Mammary epithelial cell (primary cell): ENCODE measurements at regions of chr3 and their contacts with region 1.

Region 1: DNA sequence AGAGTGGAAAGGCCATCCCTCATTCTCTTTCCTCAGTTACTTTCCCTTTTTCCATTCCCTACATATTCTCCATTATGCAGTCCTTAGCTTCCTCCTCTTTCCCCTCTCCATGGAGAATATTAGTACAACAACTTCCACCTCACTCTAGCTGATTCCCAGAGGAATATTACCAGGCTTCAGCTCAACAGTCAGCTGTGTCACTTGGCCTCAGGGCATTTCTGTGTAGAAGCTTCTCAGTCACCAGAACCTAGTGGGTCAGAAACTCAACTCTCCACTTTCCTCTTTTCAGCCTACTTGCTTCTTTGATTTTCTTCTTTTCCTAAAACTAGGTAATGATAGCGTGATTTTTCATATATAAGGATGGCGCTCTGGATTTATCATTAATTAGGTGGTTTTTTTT is 34.1 kb downstream of the PARP14 start:
- DNase-seq: no peak
- H3K4me3 ChIP-seq: no peak overlapping the region
- H3K27ac ChIP-seq: no peak overlapping the region
- H3K4me1 ChIP-seq: no peaks in the 10 kb centered on the region
- H3K27me3 ChIP-seq: no peaks in the 10 kb centered on the region
- CTCF ChIP-seq: no peak

Region 2: GRCh38 chr3:122691195-122691594 is 23.5 kb before region 1 on chr3:
- CTCF ChIA-PET with region 1: no interaction called
- dilution Hi-C with region 1: no loop called
- in situ Hi-C with region 1: no loop called
- intact Hi-C with region 1: loop called (anchors 2 kb)
- DNase-seq: no peak
- H3K4me3 ChIP-seq: no peak overlapping the region
- H3K27ac ChIP-seq: no peak overlapping the region
- H3K4me1 ChIP-seq: no peaks in the 10 kb centered on the region
- H3K27me3 ChIP-seq: no peaks in the 10 kb centered on the region
- CTCF ChIP-seq: no peak

Region 3: DNA sequence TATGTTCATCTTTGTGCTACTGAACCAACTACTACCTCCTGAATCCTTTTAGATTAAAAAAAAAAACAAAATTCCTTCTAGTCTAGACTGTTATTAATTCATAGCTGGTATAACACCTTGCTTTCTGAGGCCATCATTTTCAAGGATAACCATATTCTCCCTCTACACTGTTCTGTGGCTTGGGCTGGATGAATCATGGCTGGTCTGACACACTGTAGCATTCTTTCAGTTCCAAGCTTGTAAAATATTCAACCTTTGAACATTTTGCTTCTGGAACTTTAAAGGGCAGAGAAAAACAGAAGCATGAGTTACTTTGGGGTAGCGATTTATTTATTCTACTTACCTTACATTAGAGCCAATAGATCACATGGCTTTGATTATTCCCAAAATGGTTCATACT is 71.4 kb after region 1 on chr3:
- CTCF ChIA-PET with region 1: no interaction called
- dilution Hi-C with region 1: loop called (anchors 5 kb)
- in situ Hi-C with region 1: no loop called
- intact Hi-C with region 1: no loop called
- DNase-seq: peak; percentile 66
- H3K4me3 ChIP-seq: no peak overlapping the region
- H3K27ac ChIP-seq: no peak overlapping the region
- H3K4me1 ChIP-seq: peaks cover 61% of the 10 kb centered on the region
- H3K27me3 ChIP-seq: no peaks in the 10 kb centered on the region
- CTCF ChIP-seq: no peak